ENCODE measurements at regions of chr19 and their contacts with region 1.

Region 1: DNA sequence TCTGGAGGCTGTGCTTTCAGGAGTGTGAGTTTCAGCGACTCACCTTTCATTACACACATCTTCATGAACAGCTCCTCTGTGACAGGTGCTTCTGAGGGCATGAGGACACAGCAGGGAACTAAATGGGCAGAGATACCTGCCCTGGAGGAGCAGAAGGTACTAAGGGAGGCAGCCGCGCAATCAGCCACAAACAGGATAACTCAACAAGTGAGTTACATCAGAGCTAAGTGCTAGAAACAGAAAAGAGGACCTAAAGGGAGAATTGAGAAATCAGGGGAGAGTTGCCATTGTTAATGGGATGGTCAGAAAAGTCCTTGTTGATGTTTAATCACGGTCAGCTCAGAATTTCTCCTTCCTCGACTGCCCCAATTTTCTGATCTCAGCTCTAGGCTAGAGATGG is 42.5 kb downstream of the SYDE1 start:
- DNase-seq: no peak
- H3K4me3 ChIP-seq: no peak overlapping the region
- H3K27ac ChIP-seq: no peak overlapping the region
- H3K4me1 ChIP-seq: no peaks in the 10 kb centered on the region
- H3K27me3 ChIP-seq: no peaks in the 10 kb centered on the region
- CTCF ChIP-seq: no peak

Region 2: DNA sequence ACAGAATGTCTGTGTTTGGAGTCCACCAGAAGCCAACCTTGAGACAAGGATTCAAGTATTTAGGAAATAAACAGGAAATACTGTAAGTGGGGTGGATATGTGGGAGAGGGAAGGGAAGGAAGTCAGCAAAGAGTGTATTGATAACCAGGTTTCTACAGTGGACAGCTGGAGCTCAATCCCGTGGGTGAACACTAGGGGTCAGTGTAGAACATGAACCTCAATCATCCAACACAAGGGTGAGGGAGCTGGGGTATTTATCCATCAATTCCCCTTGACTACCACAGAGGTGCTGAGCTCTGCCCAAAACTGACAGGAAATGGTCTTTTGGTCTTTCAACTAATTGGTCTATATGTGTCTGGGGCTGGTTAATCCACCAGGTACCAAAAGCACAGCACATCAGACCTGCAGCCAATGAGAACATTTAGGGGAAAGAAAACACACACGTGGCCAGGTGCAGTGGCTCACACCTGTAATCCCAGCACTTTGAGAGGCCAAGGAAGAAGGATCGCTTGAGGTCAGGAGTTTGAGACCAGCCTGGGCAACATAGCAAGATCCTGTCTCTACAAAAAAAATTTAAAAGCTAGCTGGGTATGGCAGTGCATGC is 48.2 kb before region 1 on chr19:
- intact Hi-C with region 1: loop called (anchors 5 kb)
- DNase-seq: no peak
- H3K4me3 ChIP-seq: no peak overlapping the region
- H3K27ac ChIP-seq: peak overlapping the region; percentile 51
- H3K4me1 ChIP-seq: peaks cover 1% of the 10 kb centered on the region
- H3K27me3 ChIP-seq: no peaks in the 10 kb centered on the region
- CTCF ChIP-seq: peak; percentile 80